Mammary epithelial cell (primary cell): ENCODE measurements at regions of chr18 and their contacts with region 1.

Region 1: GRCh38 chr18:36302676-36303075 is 5.2 kb downstream of the FHOD3 start:
- DNase-seq: no peak
- H3K4me3 ChIP-seq: no peak overlapping the region
- H3K27ac ChIP-seq: no peak overlapping the region
- H3K4me1 ChIP-seq: peaks cover 42% of the 10 kb centered on the region
- H3K27me3 ChIP-seq: no peaks in the 10 kb centered on the region
- CTCF ChIP-seq: no peak

Region 2: GRCh38 chr18:36366994-36367839 is 64.5 kb after region 1 on chr18:
- CTCF ChIA-PET with region 1: no interaction called
- dilution Hi-C with region 1: loop called (anchors 5 kb)
- in situ Hi-C with region 1: no loop called
- intact Hi-C with region 1: loop called (anchors 2 kb)
- DNase-seq: no peak
- H3K4me3 ChIP-seq: no peak overlapping the region
- H3K27ac ChIP-seq: no peak overlapping the region
- H3K4me1 ChIP-seq: peaks cover 4% of the 10 kb centered on the region
- H3K27me3 ChIP-seq: no peaks in the 10 kb centered on the region
- CTCF ChIP-seq: no peak